ENCODE measurements at regions of chr17 and their contacts with region 1.

Region 1: DNA sequence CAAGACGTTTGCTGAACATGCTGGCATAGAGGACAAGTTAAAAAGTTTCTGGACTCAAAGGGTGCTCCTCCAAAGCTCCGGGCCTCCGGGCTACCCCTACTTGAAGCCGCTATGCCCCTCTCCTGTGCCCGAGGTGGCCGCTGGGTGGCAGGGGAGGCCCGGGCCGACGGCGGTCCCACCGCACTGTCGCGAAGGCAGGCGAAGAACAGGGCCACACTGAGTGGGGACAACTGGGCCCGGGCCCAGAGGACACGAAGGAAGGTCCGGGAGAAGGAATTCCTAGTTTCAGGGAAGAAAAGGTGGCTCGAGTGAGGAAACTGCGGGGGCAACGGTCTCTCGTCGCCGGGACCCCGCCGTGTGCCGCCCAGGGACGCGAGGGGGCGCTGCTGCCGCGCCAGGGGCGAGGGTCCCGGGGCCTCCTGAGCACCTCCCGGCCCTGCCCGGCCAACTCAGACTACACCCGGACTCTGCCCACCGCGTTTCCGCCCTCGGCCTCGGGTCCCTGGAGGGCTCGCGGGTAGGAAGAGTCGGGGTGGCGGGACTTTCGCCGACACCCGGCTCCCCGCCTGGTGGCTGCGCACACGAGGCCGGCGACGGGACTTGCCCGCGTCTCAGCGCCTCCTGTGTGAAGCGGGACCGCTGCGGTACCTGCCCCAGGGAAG is 885 bp upstream of the CHCT1 start:
- DNase-seq: peak; percentile 54 to 88 (median 70)
- ATAC-seq: peak; percentile 96 to 99 (median 98)
- H3K4me3 ChIP-seq: peak overlapping the region; percentile 23 to 62 (median 41)
- H3K27ac ChIP-seq: no peak overlapping the region
- H3K4me1 ChIP-seq: no peaks in the 10 kb centered on the region
- H3K27me3 ChIP-seq: no peaks in the 10 kb centered on the region
- CTCF ChIP-seq: peak; percentile 70 to 95 (median 86)

Region 2: GRCh38 chr17:60135151-60135950 is 286.1 kb before region 1 on chr17:
- intact Hi-C with region 1: loop called in 1 of 3 experiments (anchors 10 kb)
- DNase-seq: peak; percentile 86 to 95 (median 88)
- ATAC-seq: peak; percentile 97 to 98 (median 98)
- H3K4me3 ChIP-seq: peak overlapping the region; percentile 49 to 80 (median 70)
- H3K27ac ChIP-seq: peak overlapping the region; percentile 23 to 75 (median 34)
- H3K4me1 ChIP-seq: peaks cover 0 to 14% (median 6%) of the 10 kb centered on the region in 3 donors
- H3K27me3 ChIP-seq: peaks cover 0 to 10% (median 2%) of the 10 kb centered on the region in 4 donors
- CTCF ChIP-seq: no peak

Region 3: GRCh38 chr17:60496051-60496450 is 74.6 kb after region 1 on chr17:
- intact Hi-C with region 1: no loop called
- DNase-seq: no peak
- ATAC-seq: no peak
- H3K4me3 ChIP-seq: no peak overlapping the region
- H3K27ac ChIP-seq: no peak overlapping the region
- H3K4me1 ChIP-seq: no peaks in the 10 kb centered on the region
- H3K27me3 ChIP-seq: no peaks in the 10 kb centered on the region
- CTCF ChIP-seq: no peak

Region 4: DNA sequence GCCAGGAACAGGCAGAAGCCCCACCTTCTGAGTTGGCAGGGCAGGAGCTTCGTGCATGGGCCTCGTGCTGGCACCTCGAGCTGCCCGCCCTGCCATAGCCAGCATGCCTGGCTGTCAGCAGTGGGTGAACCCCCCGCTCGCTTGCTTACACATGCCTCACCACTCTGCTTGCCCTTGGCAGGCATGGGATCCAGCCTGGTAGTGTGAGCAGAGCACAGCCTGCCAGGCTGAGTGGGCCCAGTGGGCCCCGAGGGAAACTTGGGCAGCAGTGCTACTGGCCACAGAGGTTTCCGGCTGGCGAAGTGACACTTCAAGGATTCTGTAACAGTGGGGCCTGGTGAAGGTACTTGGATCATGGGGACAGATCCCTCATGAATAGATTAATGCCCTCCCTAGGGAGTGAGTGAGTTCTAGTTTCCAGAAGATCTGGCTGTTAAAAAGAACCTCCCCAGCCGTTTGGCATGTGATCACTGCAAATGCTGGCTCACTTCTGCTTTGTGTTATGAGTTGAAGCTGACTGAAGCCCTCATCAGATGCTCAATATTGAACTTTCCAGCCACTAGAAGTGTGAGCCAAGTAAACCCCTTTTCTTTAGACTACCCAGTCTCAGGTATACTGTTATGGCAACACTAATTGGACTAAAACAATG is 371.0 kb after region 1 on chr17:
- intact Hi-C with region 1: no loop called
- DNase-seq: peak in 1 of 6 donors; percentile 52
- ATAC-seq: peak in 1 of 4 donors; percentile 17
- H3K4me3 ChIP-seq: no peak overlapping the region
- H3K27ac ChIP-seq: no peak overlapping the region
- H3K4me1 ChIP-seq: peaks cover 8 to 37% (median 26%) of the 10 kb centered on the region in 3 donors
- H3K27me3 ChIP-seq: no peaks in the 10 kb centered on the region
- CTCF ChIP-seq: no peak

Measured in pancreas (tissue), 10 donors.